ENCODE measurements at regions of chr17 and their contacts with region 1.

Region 1: DNA sequence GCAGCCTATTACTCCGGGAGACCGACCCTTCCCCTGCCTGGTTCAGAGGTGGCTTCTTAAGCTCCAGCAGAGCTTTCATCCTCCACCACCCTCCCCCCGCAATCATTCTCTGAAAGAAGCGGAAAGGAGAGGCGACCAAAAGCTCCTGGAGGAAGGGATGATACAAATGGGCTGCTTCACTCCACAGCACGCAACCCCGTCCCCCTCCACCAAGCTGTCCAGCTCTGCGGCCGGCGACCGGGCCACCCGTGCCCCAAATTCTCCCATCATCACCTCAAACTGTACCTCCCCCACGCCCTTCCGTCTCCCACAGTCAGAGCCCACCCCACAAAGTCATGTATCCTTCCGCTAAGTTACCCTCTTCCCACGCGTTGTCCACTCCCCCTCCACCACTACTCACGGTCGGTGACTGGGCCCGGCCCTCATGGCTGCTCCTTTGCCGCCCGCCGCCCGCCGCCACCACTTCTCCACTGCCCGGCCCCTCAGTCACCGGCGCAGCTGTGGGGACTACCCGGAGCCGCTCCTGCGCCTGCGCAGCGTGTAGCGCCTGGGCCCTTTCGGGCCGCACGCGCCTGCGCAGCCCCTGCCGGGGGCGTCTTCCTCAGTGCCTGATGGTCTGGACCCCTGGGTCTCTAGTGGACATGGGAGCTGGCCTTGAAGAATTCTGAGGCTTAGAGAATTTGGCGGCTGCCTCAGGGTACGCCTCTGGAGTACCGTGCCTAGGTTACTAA is at the start of gene FAM222B:
- DNase-seq: peak; percentile 93
- ATAC-seq: peak; percentile 100
- total RNA-seq, gene FAM222B: 16.9 TPM

Region 2: DNA sequence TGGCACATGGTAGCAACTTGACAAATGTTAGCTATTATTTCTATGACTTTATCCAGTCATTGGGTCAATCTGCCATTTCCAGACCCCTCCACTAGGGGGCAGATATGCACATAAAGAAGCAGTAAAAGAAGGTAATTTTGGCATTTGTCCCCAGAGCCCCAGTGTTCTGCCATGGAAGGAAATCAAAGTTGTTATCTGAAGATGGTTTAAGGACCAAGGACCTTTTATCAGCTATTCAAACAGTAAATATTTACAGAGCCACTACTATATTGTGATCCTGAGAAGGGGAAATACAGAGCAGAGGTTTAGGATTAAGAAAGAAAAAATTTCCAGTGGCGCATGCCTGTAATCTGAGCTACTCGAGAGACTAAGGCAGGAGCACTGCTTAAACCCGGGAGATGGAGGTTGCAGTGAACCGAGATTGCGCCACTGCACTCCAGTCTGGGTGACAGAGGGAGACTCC is 78.6 kb before region 1 on chr17:
- intact Hi-C with region 1: loop called (anchors 10 kb)
- DNase-seq: no peak
- ATAC-seq: no peak

Measured in Right ventricle myocardium inferior (tissue), 1 donor.